ENCODE measurements at regions of chrX and their contacts with region 1.

Region 1: GRCh38 chrX:13955095-13955647 is 74.5 kb downstream of the GEMIN8 start:
- DNase-seq: no peak
- ATAC-seq: no peak
- H3K4me3 ChIP-seq: no peak overlapping the region
- H3K27ac ChIP-seq: no peak overlapping the region
- H3K4me1 ChIP-seq: no peaks in the 10 kb centered on the region
- H3K27me3 ChIP-seq: no peaks in the 10 kb centered on the region
- CTCF ChIP-seq: no peak
- EP300 ChIP-seq: no peak
- POLR2A ChIP-seq: no peak
- RAD21 ChIP-seq: no peak

Region 2: GRCh38 chrX:13938829-13939530 is 16.2 kb before region 1 on chrX:
- CTCF ChIA-PET with region 1: no interaction called
- POLR2A ChIA-PET with region 1: no interaction called
- in situ Hi-C with region 1: no loop called
- intact Hi-C with region 1: loop called (anchors 1 kb)
- DNase-seq: no peak
- ATAC-seq: no peak
- H3K4me3 ChIP-seq: no peak overlapping the region
- H3K27ac ChIP-seq: no peak overlapping the region
- H3K4me1 ChIP-seq: no peaks in the 10 kb centered on the region
- H3K27me3 ChIP-seq: peaks cover 1 to 16% of the 10 kb centered on the region in 2 experiments; a peak in 3 of 5 replicates
- CTCF ChIP-seq: no peak
- EP300 ChIP-seq: no peak
- POLR2A ChIP-seq: no peak
- RAD21 ChIP-seq: no peak